Heart left ventricle (tissue), 16 donors: ENCODE measurements at regions of chr3 and their contacts with region 1.

Region 1: GRCh38 chr3:123328851-123329635 is 119.8 kb downstream of the ADCY5 start:
- DNase-seq: peak; percentile 68 to 86 (median 82)
- ATAC-seq: peak; percentile 30 to 58 (median 52)
- H3K4me3 ChIP-seq: no peak overlapping the region
- H3K27ac ChIP-seq: peak overlapping the region in 11 of 12 donors; percentile 33 to 97 (median 89)
- H3K4me1 ChIP-seq: peaks cover 0 to 88% (median 32%) of the 10 kb centered on the region in 12 donors
- H3K27me3 ChIP-seq: no peaks in the 10 kb centered on the region
- CTCF ChIP-seq: peak; percentile 87 to 97 (median 96)
- POLR2A ChIP-seq: no peak

Region 2: GRCh38 chr3:123155471-123156011 is 173.5 kb before region 1 on chr3:
- intact Hi-C with region 1: no loop called
- DNase-seq: peak in 1 of 5 donors; percentile 36
- ATAC-seq: peak in 2 of 4 donors; percentile 21 to 43
- H3K4me3 ChIP-seq: no peak overlapping the region
- H3K27ac ChIP-seq: peak overlapping the region in 1 of 12 donors; percentile 75
- H3K4me1 ChIP-seq: peaks cover 0 to 24% (median 5%) of the 10 kb centered on the region in 12 donors
- H3K27me3 ChIP-seq: no peaks in the 10 kb centered on the region
- CTCF ChIP-seq: no peak
- POLR2A ChIP-seq: no peak

Region 3: DNA sequence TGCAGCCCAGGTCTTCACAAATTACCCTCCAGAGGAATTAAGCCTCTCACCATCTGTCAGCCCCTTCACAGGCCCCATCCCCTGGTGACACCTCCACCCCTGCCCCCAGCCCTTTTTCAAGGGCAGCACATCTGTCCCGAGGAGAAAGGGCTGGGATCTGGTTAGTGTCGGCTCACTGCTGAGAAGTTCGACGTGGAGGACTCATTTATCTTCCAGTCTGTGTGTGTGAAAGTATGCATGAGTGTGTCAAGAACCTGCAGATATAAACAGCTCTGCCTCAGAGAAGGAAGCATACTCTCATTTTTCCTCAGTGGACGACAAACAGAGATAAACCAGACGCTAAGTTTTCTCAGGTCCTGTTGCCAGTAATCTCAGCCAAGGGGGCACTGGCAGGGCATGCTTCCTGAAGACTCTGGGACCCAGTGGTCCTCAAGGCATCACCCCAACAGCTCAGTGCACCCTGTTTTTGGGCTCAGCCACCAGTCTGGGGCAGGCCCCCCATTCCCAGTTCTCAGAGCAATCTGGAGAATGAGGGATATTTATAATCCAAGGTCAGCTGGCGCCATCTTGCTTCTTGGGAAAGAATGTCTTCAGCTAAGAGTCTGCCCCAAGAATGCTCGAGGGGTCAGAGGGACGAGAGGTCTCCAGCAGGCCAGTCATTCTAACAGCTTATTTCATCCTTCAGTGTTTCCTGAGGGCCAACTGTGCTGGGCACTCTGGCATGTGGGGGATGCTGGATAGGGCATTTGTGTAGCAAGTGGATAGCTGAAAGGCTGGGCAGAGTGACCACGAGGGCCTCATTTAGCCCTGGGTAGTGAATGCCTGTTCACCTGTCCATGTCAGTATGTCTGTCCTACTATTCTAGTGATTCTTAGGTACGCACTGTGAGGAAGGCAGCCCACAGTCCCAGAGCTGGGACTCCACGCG is 46.2 kb after region 1 on chr3:
- intact Hi-C with region 1: loop called in 2 of 10 experiments (anchors 5 kb)
- DNase-seq: peak in 3 of 5 donors; percentile 55 to 76 (median 64)
- ATAC-seq: peak; percentile 34 to 63 (median 56)
- H3K4me3 ChIP-seq: no peak overlapping the region
- H3K27ac ChIP-seq: peak overlapping the region; percentile 60 to 96 (median 85)
- H3K4me1 ChIP-seq: peaks cover 12 to 98% (median 62%) of the 10 kb centered on the region in 12 donors
- H3K27me3 ChIP-seq: no peaks in the 10 kb centered on the region
- CTCF ChIP-seq: peak in 1 of 12 donors; percentile 14
- POLR2A ChIP-seq: no peak

Region 4: DNA sequence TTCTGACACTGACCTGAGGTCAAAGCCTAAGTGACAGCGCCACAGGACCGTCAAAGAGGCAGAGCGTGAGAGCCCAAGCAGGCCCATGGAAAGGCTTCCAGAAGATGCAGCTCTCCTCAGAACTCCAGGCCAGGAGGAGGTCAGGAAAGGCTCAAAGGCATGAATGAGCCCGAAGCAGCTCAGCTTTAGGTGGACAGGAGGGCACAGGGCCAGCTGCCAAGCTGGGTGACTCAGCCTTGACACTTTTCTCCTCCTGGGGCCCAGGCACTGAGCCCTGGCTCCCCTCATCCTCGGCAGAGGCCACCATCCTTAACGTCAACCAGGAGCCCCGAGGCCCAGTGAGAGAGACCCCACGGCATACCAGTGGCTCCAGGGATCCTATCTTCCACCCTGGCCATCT is 56.9 kb after region 1 on chr3:
- intact Hi-C with region 1: loop called in 1 of 10 experiments (anchors 5 kb)
- DNase-seq: peak in 4 of 5 donors; percentile 68 to 85 (median 74)
- ATAC-seq: peak; percentile 39 to 71 (median 60)
- H3K4me3 ChIP-seq: peak overlapping the region in 5 of 12 donors; percentile 8 to 45 (median 13)
- H3K27ac ChIP-seq: peak overlapping the region; percentile 72 to 94 (median 90)
- H3K4me1 ChIP-seq: peaks cover 4 to 100% (median 67%) of the 10 kb centered on the region in 12 donors
- H3K27me3 ChIP-seq: no peaks in the 10 kb centered on the region
- CTCF ChIP-seq: no peak
- POLR2A ChIP-seq: no peak

Region 5: DNA sequence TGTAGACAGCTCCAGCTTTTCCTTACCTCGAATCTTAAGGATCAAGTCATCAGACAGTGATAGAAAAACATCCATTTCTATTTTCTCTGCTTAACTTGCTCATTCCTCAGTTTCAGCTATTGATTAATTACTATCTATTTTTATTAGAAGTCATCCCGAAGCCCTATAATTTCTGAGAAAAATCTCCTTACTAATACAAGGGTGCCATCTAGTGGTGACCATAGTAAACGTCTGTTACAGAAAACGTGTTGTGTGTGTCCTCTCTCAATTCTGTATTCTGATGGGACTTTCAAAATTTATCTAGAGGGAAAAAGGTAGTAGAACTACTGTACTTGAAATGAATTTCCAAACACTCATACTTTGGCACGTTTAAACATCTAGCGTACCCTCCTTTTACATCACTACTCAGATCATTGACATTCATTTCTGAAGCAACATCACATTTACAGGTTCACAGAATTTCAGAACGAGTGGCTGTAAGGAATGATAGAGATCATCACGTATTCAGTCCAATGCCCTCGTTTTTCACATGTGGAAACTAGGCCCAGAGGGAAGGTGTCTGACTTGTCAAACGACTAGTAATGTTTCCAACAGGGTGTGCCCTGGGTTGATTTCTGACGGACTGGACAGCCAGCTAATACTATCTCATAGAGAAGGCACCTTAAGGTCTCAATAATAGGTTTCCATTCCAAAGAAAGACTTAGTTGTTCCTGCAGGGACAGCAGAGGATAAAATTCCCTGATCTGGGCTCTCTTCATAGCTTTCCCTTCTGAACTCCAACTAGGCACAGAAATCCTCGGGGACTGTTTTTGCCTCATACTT is 230.2 kb after region 1 on chr3:
- intact Hi-C with region 1: loop called (anchors 1 to 5 kb)
- DNase-seq: no peak
- ATAC-seq: peak in 2 of 4 donors; percentile 41
- H3K4me3 ChIP-seq: no peak overlapping the region
- H3K27ac ChIP-seq: no peak overlapping the region
- H3K4me1 ChIP-seq: peaks cover 0 to 5% (median 0%) of the 10 kb centered on the region in 12 donors
- H3K27me3 ChIP-seq: no peaks in the 10 kb centered on the region
- CTCF ChIP-seq: peak; percentile 78 to 95 (median 84)
- POLR2A ChIP-seq: no peak